Naive thymus-derived CD4-positive, alpha-beta T cell (primary cell): ENCODE measurements at regions of chr2 and their contacts with region 1.

Region 1: DNA sequence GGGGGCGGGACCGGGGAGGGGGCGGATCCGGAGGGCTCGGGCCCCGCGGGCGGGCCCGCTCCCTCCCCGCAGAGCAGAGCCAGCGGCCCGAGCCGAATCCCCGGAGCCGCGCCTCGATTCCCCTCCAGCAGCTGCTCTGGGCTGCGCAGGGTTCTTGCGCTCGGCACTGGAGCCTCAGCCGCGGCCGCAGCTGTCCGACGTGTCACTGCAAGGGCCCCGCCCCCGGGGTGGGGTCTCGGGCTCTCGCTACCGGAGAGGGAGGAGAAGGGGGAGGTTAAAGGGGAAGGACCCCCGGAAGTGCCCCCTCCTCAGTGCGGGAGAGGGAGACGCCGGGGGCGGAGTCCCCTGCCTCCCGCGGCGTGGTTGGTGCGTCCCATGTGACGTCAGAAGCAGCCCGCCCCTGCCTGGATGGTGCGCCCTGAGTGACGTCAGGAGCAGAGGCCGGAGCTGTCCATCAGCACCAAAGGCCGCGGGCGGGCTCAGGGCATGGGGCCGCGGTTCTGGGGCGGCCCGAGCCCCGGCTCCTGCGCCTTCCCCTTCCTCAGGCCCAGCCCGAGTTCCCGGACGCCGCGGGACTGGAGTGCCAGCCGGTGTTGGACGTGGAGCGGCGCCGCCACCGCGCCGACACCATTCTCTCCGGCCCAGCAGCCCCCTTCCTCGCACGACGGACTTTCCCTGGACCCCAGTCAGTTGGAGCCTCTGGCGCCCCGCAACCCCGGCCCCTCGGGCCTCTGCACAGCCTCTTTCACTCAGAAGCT is at the starts of genes CHPF and TMEM198:
- DNase-seq: peak; percentile 79 to 94 (median 88)
- ATAC-seq: peak; percentile 86
- H3K4me3 ChIP-seq: peak within 1 kb of the TSS; percentile 51
- H3K4me3 Mint-ChIP-seq: peak within 1 kb of the TSS; percentile 83 to 95 (median 90)
- H3K27ac ChIP-seq: peak within 1 kb of the TSS; percentile 78
- H3K27ac Mint-ChIP-seq: peak within 1 kb of the TSS; percentile 71 to 90 (median 78)
- H3K4me1 ChIP-seq: peaks cover 10 to 12% of the 10 kb centered on the region in 2 donors
- H3K4me1 Mint-ChIP-seq: peaks cover 18 to 30% (median 25%) of the 10 kb centered on the region in 7 donors
- H3K27me3 ChIP-seq: no peaks in the 10 kb centered on the region
- H3K27me3 Mint-ChIP-seq: peaks cover 0 to 18% (median 11%) of the 10 kb centered on the region in 5 donors
- total RNA-seq, gene CHPF: 4.3 to 15.3 (median 5.7) TPM
- total RNA-seq, gene TMEM198: 0.45 to 0.69 (median 0.50) TPM in 4 of 5 experiments, not detected in the other

Region 2: GRCh38 chr2:218286570-218287459 is 1257.0 kb before region 1 on chr2:
- CTCF ChIA-PET with region 1: no interaction called
- POLR2A ChIA-PET with region 1: no interaction called
- intact Hi-C with region 1: loop called in 1 of 2 experiments (anchors 5 kb)
- DNase-seq: peak; percentile 53 to 90 (median 78)
- ATAC-seq: peak; percentile 87
- H3K4me3 ChIP-seq: peak overlapping the region; percentile 66
- H3K4me3 Mint-ChIP-seq: peak overlapping the region; percentile 85 to 97 (median 94)
- H3K27ac ChIP-seq: peak overlapping the region; percentile 93
- H3K27ac Mint-ChIP-seq: peak overlapping the region; percentile 95 to 99 (median 99)
- H3K4me1 ChIP-seq: peaks cover 74 to 77% of the 10 kb centered on the region in 2 donors
- H3K4me1 Mint-ChIP-seq: peaks cover 53 to 87% (median 76%) of the 10 kb centered on the region in 7 donors
- H3K27me3 ChIP-seq: no peaks in the 10 kb centered on the region
- H3K27me3 Mint-ChIP-seq: no peaks in the 10 kb centered on the region

Region 3: GRCh38 chr2:219160186-219161017 is 383.4 kb before region 1 on chr2 and contains the start of gene NHEJ1:
- CTCF ChIA-PET with region 1: no interaction called
- POLR2A ChIA-PET with region 1: interaction called, 3 read pairs
- intact Hi-C with region 1: loop called in 1 of 2 experiments (anchors 5 kb)
- DNase-seq: peak; percentile 84 to 98 (median 92)
- ATAC-seq: peak; percentile 96
- H3K4me3 ChIP-seq: peak within 1 kb of the TSS; percentile 70
- H3K4me3 Mint-ChIP-seq: peak within 1 kb of the TSS; percentile 88 to 97 (median 93)
- H3K27ac ChIP-seq: peak within 1 kb of the TSS; percentile 77
- H3K27ac Mint-ChIP-seq: peak within 1 kb of the TSS; percentile 81 to 97 (median 93)
- H3K4me1 ChIP-seq: peaks cover 11 to 12% of the 10 kb centered on the region in 2 donors
- H3K4me1 Mint-ChIP-seq: peaks cover 13 to 41% (median 24%) of the 10 kb centered on the region in 7 donors
- H3K27me3 ChIP-seq: no peaks in the 10 kb centered on the region
- H3K27me3 Mint-ChIP-seq: no peaks in the 10 kb centered on the region
- total RNA-seq, gene NHEJ1: 11.4 to 24.0 (median 17.9) TPM

Region 4: DNA sequence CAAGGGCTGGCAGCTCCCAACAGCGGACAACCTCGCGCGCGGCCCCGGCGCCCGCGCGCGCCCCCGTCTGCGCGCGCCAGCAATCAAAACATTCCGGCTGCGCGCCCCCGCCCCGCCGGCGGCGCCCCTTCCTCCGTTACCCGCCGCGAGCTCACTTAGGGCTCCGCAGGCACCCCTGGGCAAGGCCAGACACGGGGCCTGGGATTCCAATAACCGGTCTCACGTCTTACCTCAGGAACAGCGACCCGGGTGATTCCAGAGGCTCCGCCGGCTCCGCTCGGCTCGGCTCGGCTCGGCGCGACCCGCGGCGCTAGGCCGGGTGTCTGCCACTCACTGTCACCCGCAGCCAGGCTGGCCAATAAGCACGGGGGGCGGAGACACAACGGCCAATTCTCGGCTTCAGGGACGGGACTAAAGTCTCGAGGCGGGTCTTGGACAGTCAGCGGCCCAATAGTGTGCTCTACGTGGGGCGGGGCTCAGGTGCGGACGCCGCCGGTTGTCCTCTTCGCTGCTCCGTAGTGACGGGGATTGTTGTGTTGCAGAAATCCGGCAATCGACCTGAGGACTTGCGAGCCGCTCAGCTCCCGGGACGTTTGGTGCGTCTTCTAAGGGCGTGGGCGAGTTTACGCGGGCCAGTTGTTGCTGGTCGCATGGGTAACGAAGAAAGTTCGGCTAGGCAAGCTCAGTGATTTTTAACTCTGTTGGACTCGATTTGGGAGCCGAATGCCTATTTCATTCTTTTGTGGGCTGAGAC is 314.3 kb before region 1 on chr2 and contains the starts of genes ANKZF1 and ATG9A:
- CTCF ChIA-PET with region 1: no interaction called
- POLR2A ChIA-PET with region 1: no interaction called
- intact Hi-C with region 1: loop called in 1 of 2 experiments (anchors 1 kb)
- DNase-seq: peak; percentile 92 to 99 (median 99)
- ATAC-seq: peak; percentile 98
- H3K4me3 ChIP-seq: peak within 1 kb of the TSS; percentile 80
- H3K4me3 Mint-ChIP-seq: peak within 1 kb of the TSS; percentile 94 to 100 (median 98)
- H3K27ac ChIP-seq: peak within 1 kb of the TSS; percentile 90
- H3K27ac Mint-ChIP-seq: peak within 1 kb of the TSS; percentile 96 to 100 (median 96)
- H3K4me1 ChIP-seq: peaks cover 17 to 22% of the 10 kb centered on the region in 2 donors
- H3K4me1 Mint-ChIP-seq: peaks cover 33 to 83% (median 69%) of the 10 kb centered on the region in 7 donors
- H3K27me3 ChIP-seq: no peaks in the 10 kb centered on the region
- H3K27me3 Mint-ChIP-seq: no peaks in the 10 kb centered on the region
- total RNA-seq, gene ANKZF1: 117 to 287 (median 169) TPM
- total RNA-seq, gene ATG9A: 52.6 to 66.0 (median 60.9) TPM

Region 5: DNA sequence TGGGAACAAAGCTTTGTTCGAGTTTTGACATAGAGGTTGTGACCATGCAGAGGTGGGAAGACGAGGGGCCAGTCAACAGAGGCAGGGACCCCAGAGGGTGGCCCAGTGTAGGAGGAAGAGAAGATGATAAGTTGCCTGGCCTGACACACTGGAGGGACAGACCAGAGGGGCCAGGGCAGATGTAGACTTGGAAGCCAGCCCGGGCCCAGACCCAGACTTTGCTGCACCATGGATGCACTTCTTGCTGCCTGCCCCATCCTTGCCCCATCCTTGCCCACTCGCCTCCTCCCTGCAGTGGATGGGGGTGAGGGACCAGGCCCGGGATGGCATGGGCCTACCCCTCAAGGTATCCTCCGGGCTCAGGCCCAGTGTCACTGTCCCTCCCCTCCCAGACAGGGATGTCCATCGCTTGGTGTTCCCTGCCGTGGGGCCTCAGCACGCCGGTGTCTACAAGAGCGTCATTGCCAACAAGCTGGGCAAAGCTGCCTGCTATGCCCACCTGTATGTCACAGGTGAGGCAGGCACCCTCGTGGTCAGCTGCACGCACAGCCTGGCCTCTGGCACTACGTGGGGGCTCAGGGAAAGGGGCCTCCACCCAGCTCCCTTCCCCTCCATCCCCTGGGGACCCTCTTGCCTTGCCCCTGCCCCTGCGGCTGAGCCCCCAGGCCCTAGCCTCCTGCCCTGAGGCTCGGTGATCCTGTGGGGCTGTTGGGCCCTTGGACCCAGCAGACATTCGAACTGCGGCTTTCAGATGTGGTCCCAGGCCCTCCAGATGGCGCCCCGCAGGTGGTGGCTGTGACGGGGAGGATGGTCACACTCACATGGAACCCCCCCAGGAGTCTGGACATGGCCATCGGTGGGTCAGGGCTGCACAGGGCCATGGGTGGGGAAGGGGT is 72.1 kb before region 1 on chr2:
- CTCF ChIA-PET with region 1: no interaction called
- POLR2A ChIA-PET with region 1: no interaction called
- intact Hi-C with region 1: no loop called
- DNase-seq: no peak
- ATAC-seq: no peak
- H3K4me3 ChIP-seq: no peak overlapping the region
- H3K4me3 Mint-ChIP-seq: no peak overlapping the region
- H3K27ac ChIP-seq: no peak overlapping the region
- H3K27ac Mint-ChIP-seq: no peak overlapping the region
- H3K4me1 ChIP-seq: no peaks in the 10 kb centered on the region
- H3K4me1 Mint-ChIP-seq: peaks cover 3 to 5% (median 4%) of the 10 kb centered on the region in 7 donors
- H3K27me3 ChIP-seq: no peaks in the 10 kb centered on the region
- H3K27me3 Mint-ChIP-seq: peaks cover 0 to 4% (median 0%) of the 10 kb centered on the region in 5 donors

Region 6: DNA sequence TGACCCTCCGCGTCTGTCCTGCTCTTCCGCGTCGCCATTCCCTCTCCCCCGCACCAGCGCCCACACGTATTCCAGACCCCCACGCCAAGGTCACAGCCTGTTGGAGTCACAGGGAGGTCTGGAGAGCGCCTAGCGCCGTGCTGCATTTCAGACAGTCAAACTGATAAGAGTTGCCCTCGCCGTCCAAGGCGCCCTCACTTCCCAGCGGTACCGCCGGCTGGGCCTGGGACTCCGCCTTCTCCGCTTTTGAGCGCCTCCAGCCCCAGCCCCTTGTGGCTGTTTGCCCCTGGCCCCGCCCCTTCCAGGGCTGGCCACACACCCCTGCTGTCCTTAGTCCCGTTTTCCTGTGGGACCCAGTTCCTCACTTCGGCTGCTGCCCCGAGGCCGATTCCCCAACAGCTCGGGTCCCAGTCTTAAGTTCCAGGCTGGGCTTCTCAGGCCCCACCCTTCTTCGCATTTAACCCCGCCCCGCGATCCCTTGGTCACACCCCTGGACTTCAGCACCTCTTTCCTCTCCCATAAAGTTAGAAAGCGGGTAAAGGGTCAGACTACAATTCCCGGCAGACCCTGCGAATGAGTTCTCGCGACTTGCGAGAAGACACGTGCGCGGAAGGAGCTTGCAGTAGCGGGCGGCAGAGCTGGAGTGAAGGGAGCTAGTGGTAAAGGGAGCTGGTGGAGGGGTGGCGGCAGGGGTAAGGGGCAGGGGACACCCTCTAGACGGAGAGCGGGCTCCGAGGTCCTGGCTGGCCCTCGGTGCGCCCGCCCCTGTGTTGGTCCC is 45.3 kb before region 1 on chr2 and contains the start of gene GMPPA:
- CTCF ChIA-PET with region 1: interaction called, 5 read pairs
- POLR2A ChIA-PET with region 1: interaction called, 4 read pairs
- intact Hi-C with region 1: loop called (anchors 1 kb)
- DNase-seq: peak; percentile 78 to 95 (median 90)
- ATAC-seq: peak; percentile 94
- H3K4me3 ChIP-seq: peak within 1 kb of the TSS; percentile 85
- H3K4me3 Mint-ChIP-seq: peak within 1 kb of the TSS; percentile 91 to 99 (median 96)
- H3K27ac ChIP-seq: peak within 1 kb of the TSS; percentile 79
- H3K27ac Mint-ChIP-seq: peak within 1 kb of the TSS; percentile 76 to 97 (median 86)
- H3K4me1 ChIP-seq: peaks cover 19 to 22% of the 10 kb centered on the region in 2 donors
- H3K4me1 Mint-ChIP-seq: peaks cover 26 to 42% (median 36%) of the 10 kb centered on the region in 7 donors
- H3K27me3 ChIP-seq: peaks cover 4 to 9% of the 10 kb centered on the region in 2 donors
- H3K27me3 Mint-ChIP-seq: peaks cover 28 to 47% (median 40%) of the 10 kb centered on the region in 5 donors
- total RNA-seq, gene GMPPA: 22.4 to 58.3 (median 37.2) TPM

Region 7: DNA sequence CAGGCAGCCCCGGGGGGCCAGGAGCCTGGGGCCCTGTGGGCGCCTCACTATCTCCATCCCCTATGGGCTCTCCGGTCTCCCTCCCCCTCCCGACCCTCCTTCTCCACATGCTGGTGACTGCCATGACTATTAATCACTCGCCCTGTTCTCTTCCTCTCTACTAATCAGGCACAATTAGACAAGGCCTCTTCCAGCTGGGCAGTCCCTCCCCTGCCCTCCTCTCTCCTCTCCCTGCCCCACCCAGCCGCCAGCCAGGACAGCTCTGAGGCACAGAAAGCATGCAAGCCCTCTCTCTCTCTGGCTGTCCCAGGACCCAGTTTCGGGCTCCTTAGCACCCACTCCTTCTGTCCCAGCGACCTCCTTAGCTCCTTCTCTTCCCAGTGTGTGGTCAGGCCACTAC is 23.7 kb before region 1 on chr2:
- CTCF ChIA-PET with region 1: no interaction called
- POLR2A ChIA-PET with region 1: no interaction called
- intact Hi-C with region 1: no loop called
- DNase-seq: no peak
- ATAC-seq: no peak
- H3K4me3 ChIP-seq: no peak overlapping the region
- H3K4me3 Mint-ChIP-seq: peak overlapping the region in 1 of 10 donors; percentile 45
- H3K27ac ChIP-seq: no peak overlapping the region
- H3K27ac Mint-ChIP-seq: no peak overlapping the region
- H3K4me1 ChIP-seq: peaks cover 0 to 5% of the 10 kb centered on the region in 2 donors
- H3K4me1 Mint-ChIP-seq: peaks cover 3 to 29% (median 21%) of the 10 kb centered on the region in 7 donors
- H3K27me3 ChIP-seq: peaks cover 0 to 32% of the 10 kb centered on the region in 2 donors
- H3K27me3 Mint-ChIP-seq: peaks cover 75 to 82% (median 80%) of the 10 kb centered on the region in 5 donors

Region 8: GRCh38 chr2:219642465-219643080 is 98.8 kb after region 1 on chr2:
- CTCF ChIA-PET with region 1: interaction called, 47 read pairs
- POLR2A ChIA-PET with region 1: no interaction called
- intact Hi-C with region 1: loop called in 1 of 2 experiments (anchors 1 kb)
- DNase-seq: peak; percentile 73 to 88 (median 83)
- ATAC-seq: peak; percentile 99
- H3K4me3 ChIP-seq: no peak overlapping the region
- H3K4me3 Mint-ChIP-seq: peak overlapping the region in 1 of 10 donors; percentile 29
- H3K27ac ChIP-seq: no peak overlapping the region
- H3K27ac Mint-ChIP-seq: peak overlapping the region in 3 of 9 donors; percentile 16 to 69 (median 20)
- H3K4me1 ChIP-seq: peaks cover 3 to 4% of the 10 kb centered on the region in 2 donors
- H3K4me1 Mint-ChIP-seq: peaks cover 0 to 15% (median 0%) of the 10 kb centered on the region in 7 donors
- H3K27me3 ChIP-seq: no peaks in the 10 kb centered on the region
- H3K27me3 Mint-ChIP-seq: peaks cover 3 to 29% (median 12%) of the 10 kb centered on the region in 5 donors

Region 9: GRCh38 chr2:220396287-220396686 is 852.5 kb after region 1 on chr2:
- CTCF ChIA-PET with region 1: no interaction called
- POLR2A ChIA-PET with region 1: no interaction called
- intact Hi-C with region 1: no loop called
- DNase-seq: no peak
- ATAC-seq: no peak
- H3K4me3 ChIP-seq: no peak overlapping the region
- H3K4me3 Mint-ChIP-seq: no peak overlapping the region
- H3K27ac ChIP-seq: no peak overlapping the region
- H3K27ac Mint-ChIP-seq: no peak overlapping the region
- H3K4me1 ChIP-seq: no peaks in the 10 kb centered on the region
- H3K4me1 Mint-ChIP-seq: no peaks in the 10 kb centered on the region
- H3K27me3 ChIP-seq: no peaks in the 10 kb centered on the region
- H3K27me3 Mint-ChIP-seq: peaks cover 0 to 4% (median 0%) of the 10 kb centered on the region in 5 donors